Gastrocnemius medialis (tissue), 4 donors: ENCODE measurements at regions of chr15 and their contacts with region 1.

Region 1: GRCh38 chr15:42385206-42385979 is 26.1 kb downstream of the CAPN3 start:
- DNase-seq: peak; percentile 27 to 71
- ATAC-seq: peak; percentile 65 to 79
- H3K4me3 ChIP-seq: peak overlapping the region in 2 of 4 donors; percentile 1 to 37
- H3K27ac ChIP-seq: peak overlapping the region; percentile 91 to 96 (median 94)
- H3K4me1 ChIP-seq: peaks cover 49 to 54% of the 10 kb centered on the region in 2 donors
- H3K27me3 ChIP-seq: no peaks in the 10 kb centered on the region
- CTCF ChIP-seq: peak; percentile 37 to 73 (median 63)
- POLR2A ChIP-seq: no peak

Region 2: GRCh38 chr15:42207674-42208579 is 177.5 kb before region 1 on chr15 and contains the start of gene VPS39:
- in situ Hi-C with region 1: no loop called
- intact Hi-C with region 1: loop called (anchors 10 kb)
- DNase-seq: peak; percentile 62 to 74
- ATAC-seq: peak; percentile 92 to 97
- H3K4me3 ChIP-seq: peak within 1 kb of the TSS; percentile 83 to 98 (median 91)
- H3K27ac ChIP-seq: peak within 1 kb of the TSS; percentile 70 to 92 (median 79)
- H3K4me1 ChIP-seq: peaks cover 19 to 29% of the 10 kb centered on the region in 2 donors
- H3K27me3 ChIP-seq: no peaks in the 10 kb centered on the region
- CTCF ChIP-seq: no peak
- POLR2A ChIP-seq: peak; percentile 13 to 49
- total RNA-seq, gene VPS39: 28.8 to 41.8 (median 35.2) TPM

Region 3: GRCh38 chr15:42273102-42273899 is 112.1 kb before region 1 on chr15 and contains the starts of genes GANC and TMEM87A:
- in situ Hi-C with region 1: loop called in 2 of 4 experiments (anchors 10 kb)
- intact Hi-C with region 1: loop called (anchors 2 kb)
- DNase-seq: peak; percentile 98
- ATAC-seq: peak; percentile 92
- H3K4me3 ChIP-seq: peak within 1 kb of the TSS; percentile 80 to 86 (median 84)
- H3K27ac ChIP-seq: peak within 1 kb of the TSS; percentile 94 to 98 (median 98)
- H3K4me1 ChIP-seq: peaks cover 46 to 50% of the 10 kb centered on the region in 2 donors
- H3K27me3 ChIP-seq: no peaks in the 10 kb centered on the region
- CTCF ChIP-seq: peak in 1 of 5 experiments; percentile 4
- POLR2A ChIP-seq: peak; percentile 81 to 84
- total RNA-seq, gene GANC: 5.9 to 26.3 (median 11.9) TPM
- total RNA-seq, gene TMEM87A: 29.4 to 67.6 (median 37.4) TPM

Region 4: DNA sequence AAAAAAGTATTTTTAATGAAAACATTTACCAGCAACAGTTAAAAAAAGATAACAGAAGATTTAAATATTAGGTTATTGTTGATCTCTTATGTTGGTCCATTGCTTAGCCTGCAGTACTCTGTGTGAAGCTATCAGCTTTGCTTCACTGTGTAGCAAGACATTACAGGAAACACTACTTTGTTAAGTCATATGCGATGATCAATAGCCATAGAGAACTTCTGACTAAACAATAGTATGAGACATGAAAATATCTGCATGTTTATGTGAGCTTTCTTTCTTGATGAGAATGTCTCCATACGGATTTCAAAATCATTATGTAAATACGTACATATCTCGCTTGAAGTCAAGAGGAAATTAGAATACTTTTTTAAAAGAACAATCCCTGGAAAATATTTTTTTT is 53.1 kb before region 1 on chr15:
- in situ Hi-C with region 1: no loop called
- intact Hi-C with region 1: loop called (anchors 5 kb)
- DNase-seq: no peak
- ATAC-seq: no peak
- H3K4me3 ChIP-seq: no peak overlapping the region
- H3K27ac ChIP-seq: peak overlapping the region; percentile 84 to 90 (median 87)
- H3K4me1 ChIP-seq: peaks cover 23 to 30% of the 10 kb centered on the region in 2 donors
- H3K27me3 ChIP-seq: no peaks in the 10 kb centered on the region
- CTCF ChIP-seq: no peak
- POLR2A ChIP-seq: no peak

Region 5: GRCh38 chr15:42359986-42360385 is 25.4 kb before region 1 on chr15:
- in situ Hi-C with region 1: no loop called
- intact Hi-C with region 1: loop called (anchors 2 kb)
- DNase-seq: peak; percentile 58 to 79
- ATAC-seq: peak; percentile 62 to 65
- H3K4me3 ChIP-seq: peak overlapping the region; percentile 52 to 62 (median 60)
- H3K27ac ChIP-seq: peak overlapping the region; percentile 93 to 97 (median 96)
- H3K4me1 ChIP-seq: peaks cover 59 to 61% of the 10 kb centered on the region in 2 donors
- H3K27me3 ChIP-seq: no peaks in the 10 kb centered on the region
- CTCF ChIP-seq: no peak
- POLR2A ChIP-seq: no peak